ENCODE measurements at regions of chr21 and their contacts with region 1.

Region 1: DNA sequence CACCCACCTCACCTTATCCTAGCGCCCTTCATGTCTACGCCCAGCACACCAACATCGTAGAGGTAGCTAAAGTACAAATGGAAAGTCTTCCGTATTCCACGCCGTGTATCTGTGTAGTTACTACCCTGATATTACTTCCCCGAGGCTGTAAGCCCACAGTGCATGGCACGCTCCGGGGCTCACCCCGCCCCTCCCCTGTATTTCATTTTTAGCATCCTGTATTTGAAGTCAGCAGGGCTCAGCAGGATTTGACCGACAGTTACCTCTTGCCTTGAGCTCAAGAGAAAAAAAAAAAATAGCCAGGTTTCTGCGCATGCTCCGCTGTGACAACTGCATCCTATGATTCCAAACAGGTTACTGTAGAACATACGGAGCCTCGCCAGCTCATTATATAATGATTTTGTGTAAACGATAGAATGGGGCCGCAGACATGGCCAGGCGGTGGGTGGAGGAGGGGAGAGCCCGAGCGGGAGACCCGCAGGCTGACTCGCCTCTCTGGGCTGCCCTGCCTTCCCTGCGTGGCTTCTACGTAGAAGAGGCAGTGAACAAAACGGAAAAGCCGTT is 1.3 kb downstream of the ABCG1 start:
- DNase-seq: peak; percentile 77
- H3K4me3 ChIP-seq: peak overlapping the region; percentile 55 to 70 (median 64)
- H3K27ac ChIP-seq: no peak overlapping the region
- H3K4me1 ChIP-seq: peaks cover 33% of the 10 kb centered on the region
- H3K27me3 ChIP-seq: no peaks in the 10 kb centered on the region
- CTCF ChIP-seq: no peak

Region 2: DNA sequence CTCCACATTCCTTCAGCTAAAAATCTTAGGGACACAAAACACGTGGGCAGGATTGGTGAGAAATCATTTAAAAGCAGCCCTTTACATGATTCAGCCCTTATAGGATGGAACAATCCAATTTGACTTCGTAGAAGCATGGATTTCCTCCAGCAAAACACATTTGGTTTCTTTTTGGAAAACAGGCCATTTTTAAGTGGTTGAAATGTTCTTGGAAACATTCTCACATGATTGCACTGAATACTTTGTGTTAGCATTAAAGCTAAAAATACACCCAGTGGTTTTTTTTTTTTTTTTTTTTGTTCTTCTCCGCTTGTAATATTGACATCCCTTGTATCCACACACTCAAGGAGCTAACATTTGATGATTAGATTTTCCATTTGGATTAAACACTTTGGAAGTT is 43.4 kb before region 1 on chr21:
- CTCF ChIA-PET with region 1: no interaction called
- dilution Hi-C with region 1: loop called (anchors 5 kb)
- in situ Hi-C with region 1: no loop called
- intact Hi-C with region 1: no loop called
- DNase-seq: no peak
- H3K4me3 ChIP-seq: no peak overlapping the region
- H3K27ac ChIP-seq: no peak overlapping the region
- H3K4me1 ChIP-seq: peaks cover under 1% of the 10 kb centered on the region
- H3K27me3 ChIP-seq: no peaks in the 10 kb centered on the region
- CTCF ChIP-seq: no peak

Measured in mammary epithelial cell (primary cell).